ENCODE measurements at regions of chr6 and their contacts with region 1.

Region 1: GRCh38 chr6:41779793-41780545 is at the start of gene FRS3:
- DNase-seq: peak; percentile 94 to 100 (median 100)

Region 2: GRCh38 chr6:41675176-41675770 is 104.7 kb before region 1 on chr6:
- intact Hi-C with region 1: no loop called
- DNase-seq: no peak

Region 3: DNA sequence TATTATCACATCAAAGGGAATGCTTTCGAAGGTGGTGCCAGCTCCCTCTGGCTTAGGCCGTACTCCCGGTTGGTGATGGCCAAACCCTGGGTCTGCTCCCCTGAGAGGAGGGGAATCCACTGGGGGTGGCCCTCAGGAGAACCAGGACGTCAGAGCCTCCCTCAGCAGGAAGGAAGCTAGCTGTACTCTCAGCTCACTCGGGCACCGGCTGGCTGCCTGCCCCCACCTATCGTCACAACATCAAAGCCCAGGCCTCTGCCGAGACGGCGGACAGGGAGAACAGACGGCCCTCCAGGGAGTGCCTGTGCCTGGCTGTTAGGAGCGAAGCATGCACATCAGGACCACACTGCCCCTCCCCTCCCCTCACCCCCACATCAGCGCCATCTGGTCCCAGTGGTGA is 23.6 kb before region 1 on chr6:
- intact Hi-C with region 1: no loop called
- DNase-seq: no peak

Region 4: DNA sequence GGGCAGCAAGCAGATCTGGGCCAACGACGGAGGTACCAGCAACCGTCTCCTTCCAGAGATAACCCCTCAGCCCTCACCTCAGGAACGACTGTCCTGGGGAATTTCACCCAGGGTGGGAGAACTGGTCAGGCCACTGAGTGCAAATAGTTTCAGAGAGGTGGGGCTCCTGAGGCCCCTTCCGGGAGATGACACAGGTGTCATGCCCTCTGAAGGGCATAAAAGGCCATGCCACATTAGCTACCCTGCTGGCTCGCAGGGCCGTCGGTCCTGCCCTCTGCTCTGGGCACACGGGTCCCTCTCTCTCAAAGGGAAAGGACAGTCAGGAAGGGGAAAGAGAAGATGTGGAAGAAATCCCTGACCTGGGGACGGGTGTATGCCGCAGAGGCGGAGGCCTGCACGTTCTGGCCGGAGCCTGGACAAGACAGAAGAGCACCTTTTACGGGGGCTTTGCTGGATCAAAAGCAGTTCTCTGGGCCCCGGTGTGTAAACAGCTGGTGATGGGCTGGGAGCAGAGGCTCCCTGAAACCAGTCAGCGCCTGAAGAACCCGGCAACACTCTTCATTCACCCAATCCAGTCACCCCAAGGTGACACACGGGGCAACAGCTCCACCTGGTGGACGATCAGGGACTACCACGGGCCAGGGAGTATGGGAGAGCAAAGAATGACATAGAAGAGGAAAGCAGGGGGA is 264.0 kb after region 1 on chr6:
- intact Hi-C with region 1: loop called (anchors 2 kb)
- DNase-seq: peak; percentile 72 to 96 (median 92)